PC-9 (cell line): ENCODE measurements at regions of chr17 and their contacts with region 1.

Region 1: DNA sequence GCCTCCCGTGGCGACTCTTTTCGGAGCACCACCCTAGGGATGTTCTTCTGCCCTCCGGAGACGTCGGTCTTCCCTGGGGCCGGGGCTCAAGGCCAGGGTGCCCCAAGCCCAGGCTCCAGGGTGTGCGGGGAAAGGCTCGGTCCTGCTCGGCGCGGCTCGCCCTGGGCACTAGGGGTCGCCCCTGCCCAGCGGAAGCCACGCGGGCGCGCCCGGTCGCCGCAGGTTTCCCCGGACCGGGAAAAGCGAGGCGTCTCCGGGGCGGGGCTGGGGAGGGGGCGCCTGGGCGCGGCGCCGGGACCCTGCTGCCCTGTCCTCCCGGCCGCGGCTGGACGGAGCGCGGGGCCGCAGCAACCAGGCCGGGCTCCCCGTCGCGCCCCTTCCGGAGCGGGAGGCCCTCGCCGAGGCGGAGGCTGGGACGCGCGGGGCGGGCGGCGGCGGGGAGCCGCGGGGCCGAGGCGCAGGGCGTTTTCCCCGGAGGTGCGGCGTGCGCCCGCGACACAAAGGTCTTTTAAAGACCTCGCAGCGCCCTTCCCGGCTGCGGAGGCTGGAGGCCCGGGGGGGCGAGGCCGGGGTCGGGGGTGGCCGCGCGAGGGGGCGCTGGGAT is 76.4 kb downstream of the MRC2 start:
- DNase-seq: peak in 1 of 2 experiments; percentile 87
- H3K4me3 ChIP-seq: peak overlapping the region; percentile 92
- H3K27ac ChIP-seq: peak overlapping the region; percentile 89
- H3K4me1 ChIP-seq: peaks cover 29% of the 10 kb centered on the region
- H3K27me3 ChIP-seq: no peaks in the 10 kb centered on the region
- CTCF ChIP-seq: peak; percentile 84

Region 2: GRCh38 chr17:62778689-62779681 is 75.1 kb after region 1 on chr17:
- CTCF ChIA-PET with region 1: no interaction called
- POLR2A ChIA-PET with region 1: no interaction called
- intact Hi-C with region 1: loop called (anchors 1 kb)
- DNase-seq: peak; percentile 89 to 98
- H3K4me3 ChIP-seq: peak overlapping the region; percentile 22; the same call in 1 of the 2 replicates
- H3K27ac ChIP-seq: peak overlapping the region; percentile 98
- H3K4me1 ChIP-seq: peaks cover 55% of the 10 kb centered on the region
- H3K27me3 ChIP-seq: no peaks in the 10 kb centered on the region
- CTCF ChIP-seq: no peak

Region 3: DNA sequence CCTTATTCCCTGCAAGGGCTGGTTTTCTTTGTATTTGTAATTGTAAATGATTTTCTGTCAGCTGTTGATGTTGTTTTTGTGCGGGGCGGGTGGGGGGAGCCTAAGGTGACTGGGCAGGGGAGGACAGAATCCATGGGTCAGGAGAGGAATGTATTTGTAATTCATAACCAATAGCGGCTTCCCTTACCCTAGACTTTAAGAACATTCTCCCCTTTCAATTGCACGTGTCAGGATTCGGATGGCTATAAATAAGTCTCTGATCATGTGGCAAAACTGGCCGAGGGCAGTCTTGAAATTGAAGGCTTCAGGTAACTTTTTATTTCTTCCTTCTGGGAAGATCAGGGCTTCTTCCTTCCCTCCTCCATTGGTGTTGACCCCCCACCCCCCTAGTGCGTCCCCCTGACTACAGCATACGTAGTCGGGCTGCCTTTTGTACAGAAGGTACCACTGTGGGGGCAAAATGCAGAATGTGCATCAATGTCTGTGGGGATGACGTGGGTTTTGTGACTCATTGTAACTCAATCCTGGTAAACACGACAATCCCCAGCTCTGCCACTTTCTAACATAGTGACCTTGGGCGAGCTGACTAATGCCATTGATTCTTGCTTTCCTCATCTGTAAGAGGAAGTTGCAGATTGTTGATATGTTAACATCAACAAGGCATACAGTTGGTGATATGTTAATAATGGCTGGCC is 88.0 kb after region 1 on chr17:
- CTCF ChIA-PET with region 1: no interaction called
- POLR2A ChIA-PET with region 1: interaction called, 3 read pairs
- intact Hi-C with region 1: loop called (anchors 1 kb)
- DNase-seq: peak; percentile 67 to 98
- H3K4me3 ChIP-seq: peak overlapping the region; percentile 21; the same call in 1 of the 2 replicates
- H3K27ac ChIP-seq: peak overlapping the region; percentile 94
- H3K4me1 ChIP-seq: peaks cover 47% of the 10 kb centered on the region
- H3K27me3 ChIP-seq: no peaks in the 10 kb centered on the region
- CTCF ChIP-seq: no peak

Region 4: DNA sequence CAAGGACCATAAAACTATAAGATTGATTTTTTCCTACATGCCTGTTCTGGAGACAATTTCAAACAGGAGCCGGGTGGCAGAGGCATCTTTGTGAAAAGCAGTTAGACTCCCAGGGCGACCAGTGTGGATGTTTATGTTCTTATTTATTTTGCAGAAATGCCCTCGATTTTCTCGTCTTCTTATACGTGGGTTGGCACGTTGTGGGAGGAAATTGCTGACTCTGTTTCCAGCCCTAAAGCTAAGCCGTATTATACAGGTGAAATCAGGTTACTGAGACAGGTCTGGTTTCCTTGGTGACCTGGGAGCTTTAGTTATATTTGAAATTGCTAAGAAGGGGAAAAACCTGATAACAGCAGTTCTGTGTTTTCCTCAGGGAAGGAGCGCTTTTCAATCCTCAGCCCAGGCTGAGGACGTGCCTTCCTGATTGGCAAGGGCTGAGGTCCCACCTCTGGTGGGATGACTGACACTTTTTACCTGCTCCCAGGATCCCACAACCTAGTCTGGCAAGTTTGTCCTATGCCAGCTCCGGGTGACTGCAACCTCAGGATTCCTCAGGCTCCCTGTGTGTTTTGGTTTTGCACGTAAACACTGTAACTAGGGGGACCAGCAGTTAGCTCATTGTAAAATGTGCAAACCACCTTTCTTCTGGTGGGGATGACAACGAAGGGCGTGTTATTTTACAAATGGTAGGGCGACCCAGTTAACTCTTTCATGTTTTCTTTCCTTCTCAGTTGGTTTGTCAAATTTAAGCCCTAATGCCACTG is 96.6 kb after region 1 on chr17:
- CTCF ChIA-PET with region 1: no interaction called
- POLR2A ChIA-PET with region 1: interaction called, 10 read pairs
- intact Hi-C with region 1: no loop called
- DNase-seq: peak; percentile 88 to 98
- H3K4me3 ChIP-seq: peak overlapping the region; percentile 43; the same call in 1 of the 2 replicates
- H3K27ac ChIP-seq: peak overlapping the region; percentile 84
- H3K4me1 ChIP-seq: peaks cover 59% of the 10 kb centered on the region
- H3K27me3 ChIP-seq: no peaks in the 10 kb centered on the region
- CTCF ChIP-seq: no peak

Region 5: GRCh38 chr17:62892870-62893338 is 189.0 kb after region 1 on chr17:
- CTCF ChIA-PET with region 1: no interaction called
- POLR2A ChIA-PET with region 1: no interaction called
- intact Hi-C with region 1: loop called (anchors 10 kb)
- DNase-seq: peak; percentile 70 to 95
- H3K4me3 ChIP-seq: no peak overlapping the region; the same call in 1 of the 2 replicates
- H3K27ac ChIP-seq: peak overlapping the region; percentile 81
- H3K4me1 ChIP-seq: peaks cover 46% of the 10 kb centered on the region
- H3K27me3 ChIP-seq: no peaks in the 10 kb centered on the region
- CTCF ChIP-seq: no peak

Region 6: GRCh38 chr17:62968445-62968923 is 264.6 kb after region 1 on chr17:
- CTCF ChIA-PET with region 1: no interaction called
- POLR2A ChIA-PET with region 1: no interaction called
- intact Hi-C with region 1: loop called (anchors 1 kb)
- DNase-seq: peak; percentile 50 to 84
- H3K4me3 ChIP-seq: peak overlapping the region; percentile 88
- H3K27ac ChIP-seq: peak overlapping the region; percentile 60
- H3K4me1 ChIP-seq: peaks cover 39% of the 10 kb centered on the region
- H3K27me3 ChIP-seq: no peaks in the 10 kb centered on the region
- CTCF ChIP-seq: peak; percentile 86

Region 7: GRCh38 chr17:63406689-63407330 is 702.9 kb after region 1 on chr17:
- CTCF ChIA-PET with region 1: no interaction called
- POLR2A ChIA-PET with region 1: no interaction called
- intact Hi-C with region 1: loop called (anchors 1 kb)
- DNase-seq: peak; percentile 55 to 71
- H3K4me3 ChIP-seq: no peak overlapping the region
- H3K27ac ChIP-seq: no peak overlapping the region
- H3K4me1 ChIP-seq: no peaks in the 10 kb centered on the region
- H3K27me3 ChIP-seq: no peaks in the 10 kb centered on the region
- CTCF ChIP-seq: peak; percentile 86